Left lung (tissue), 14 donors: ENCODE measurements at regions of chr19 and their contacts with region 1.

Region 1: GRCh38 chr19:40054632-40055031 is 1.4 kb downstream of the ZNF780B start:
- DNase-seq: no peak
- ATAC-seq: no peak
- H3K4me3 ChIP-seq: peak overlapping the region in 1 of 2 donors; percentile 78
- H3K27ac ChIP-seq: no peak overlapping the region
- H3K4me1 ChIP-seq: peaks cover 0 to 15% of the 10 kb centered on the region in 2 donors
- H3K27me3 ChIP-seq: no peaks in the 10 kb centered on the region
- CTCF ChIP-seq: no peak

Region 2: GRCh38 chr19:40013991-40014390 is 40.6 kb before region 1 on chr19:
- intact Hi-C with region 1: loop called in 1 of 2 experiments (anchors 5 kb)
- DNase-seq: no peak
- ATAC-seq: no peak
- H3K4me3 ChIP-seq: no peak overlapping the region
- H3K27ac ChIP-seq: no peak overlapping the region
- H3K4me1 ChIP-seq: no peaks in the 10 kb centered on the region
- H3K27me3 ChIP-seq: no peaks in the 10 kb centered on the region
- CTCF ChIP-seq: no peak